OCI-LY7 (cell line): ENCODE measurements at regions of chr22 and their contacts with region 1.

Region 1: DNA sequence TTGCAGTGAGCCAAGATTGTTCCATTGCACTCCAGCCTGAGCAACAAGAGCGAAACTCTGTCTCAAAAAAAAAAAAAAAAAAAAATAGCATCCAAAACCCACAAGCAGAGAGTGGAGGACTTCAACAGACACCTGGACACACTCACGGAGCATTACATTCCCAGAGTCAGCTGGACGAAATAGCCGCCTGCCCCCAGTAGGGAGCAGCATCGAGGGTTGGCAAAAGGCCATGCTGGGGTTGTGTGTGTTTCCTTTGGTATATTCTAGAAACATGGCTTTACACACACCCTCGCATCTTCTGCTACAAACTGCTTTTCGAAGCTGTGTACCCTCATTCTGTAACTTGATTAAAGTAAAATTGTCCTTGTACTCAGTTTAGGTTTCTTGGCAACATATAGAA is 5.3 kb downstream of the ADA2 start:
- DNase-seq: peak; percentile 67
- H3K4me3 ChIP-seq: no peak overlapping the region
- H3K27ac ChIP-seq: peak overlapping the region; percentile 4
- H3K4me1 ChIP-seq: peaks cover 47% of the 10 kb centered on the region
- CTCF ChIP-seq: peak; percentile 72

Region 2: DNA sequence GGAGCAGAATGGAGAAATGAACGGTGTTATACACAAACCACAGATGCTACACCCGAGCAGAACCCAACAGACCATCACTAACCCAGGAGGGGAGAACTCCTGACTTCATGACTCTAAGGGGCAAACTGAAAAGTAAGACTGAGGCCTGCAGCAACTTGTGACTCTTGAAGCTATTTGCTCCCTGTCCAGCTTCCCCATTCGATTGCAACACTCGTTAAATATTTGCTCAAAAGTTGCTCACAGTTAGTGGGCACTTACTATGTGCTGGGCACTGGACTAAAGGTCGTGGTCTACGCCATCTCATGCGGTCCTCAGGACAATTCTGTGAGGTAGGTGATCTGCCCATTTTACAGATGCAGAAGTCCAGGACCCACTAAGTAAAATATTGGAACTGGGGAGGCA is 14.8 kb after region 1 on chr22:
- CTCF ChIA-PET with region 1: no interaction called
- POLR2A ChIA-PET with region 1: interaction called, 10 read pairs
- intact Hi-C with region 1: no loop called
- DNase-seq: no peak
- H3K4me3 ChIP-seq: no peak overlapping the region
- H3K27ac ChIP-seq: no peak overlapping the region
- H3K4me1 ChIP-seq: no peaks in the 10 kb centered on the region
- CTCF ChIP-seq: no peak

Region 3: GRCh38 chr22:17258015-17258787 is 44.2 kb after region 1 on chr22:
- CTCF ChIA-PET with region 1: interaction called, 4 read pairs
- POLR2A ChIA-PET with region 1: interaction called, 21 read pairs
- intact Hi-C with region 1: loop called (anchors 1 kb)
- DNase-seq: peak; percentile 93
- H3K4me3 ChIP-seq: peak overlapping the region; percentile 44
- H3K27ac ChIP-seq: peak overlapping the region; percentile 84
- H3K4me1 ChIP-seq: peaks cover 23% of the 10 kb centered on the region
- CTCF ChIP-seq: no peak

Region 4: GRCh38 chr22:17368554-17369438 is 154.8 kb after region 1 on chr22:
- CTCF ChIA-PET with region 1: no interaction called
- POLR2A ChIA-PET with region 1: no interaction called
- intact Hi-C with region 1: loop called (anchors 2 kb)
- DNase-seq: peak; percentile 71
- H3K4me3 ChIP-seq: peak overlapping the region; percentile 66
- H3K27ac ChIP-seq: no peak overlapping the region
- H3K4me1 ChIP-seq: peaks cover 14% of the 10 kb centered on the region
- CTCF ChIP-seq: no peak

Region 5: DNA sequence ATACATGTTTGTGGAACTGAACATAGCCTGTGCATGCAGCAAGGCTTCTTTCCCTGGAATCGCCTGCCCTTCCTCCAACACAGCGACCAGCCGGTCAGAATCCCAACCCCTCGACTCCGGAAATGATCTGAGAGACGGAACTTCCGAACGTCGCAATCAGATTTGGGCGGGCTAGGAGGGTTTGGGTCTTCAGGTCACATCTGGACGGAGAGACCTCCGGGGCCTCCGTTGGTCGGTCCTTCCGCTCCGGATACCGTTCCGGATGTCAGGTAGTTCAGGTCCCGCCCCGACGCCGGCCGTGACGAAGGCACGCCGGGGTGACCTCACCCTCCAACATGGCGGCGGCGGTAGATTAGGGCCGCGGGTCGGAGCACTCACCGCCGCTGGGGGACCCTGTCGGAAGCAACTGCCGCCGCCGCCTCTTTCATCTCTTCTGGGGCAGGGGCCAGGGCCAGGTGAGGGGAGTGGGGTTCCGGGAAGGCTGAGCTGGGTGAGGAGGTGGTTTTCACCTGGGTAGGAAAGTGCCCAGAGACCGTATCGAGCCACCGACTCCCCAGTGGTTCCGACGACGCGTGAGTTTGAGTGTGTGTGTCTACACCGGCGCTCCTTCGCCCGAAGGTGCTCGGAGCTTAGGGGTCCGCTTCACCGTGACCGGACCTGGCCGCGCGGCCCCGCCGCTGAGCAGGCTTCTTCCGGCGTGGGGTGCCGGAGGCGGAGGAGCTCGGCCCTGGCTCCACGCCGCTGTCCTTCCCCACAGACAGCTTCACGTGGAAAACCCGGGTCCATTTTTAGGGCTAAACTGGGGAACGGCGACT is 424.7 kb after region 1 on chr22 and contains the start of gene BCL2L13:
- CTCF ChIA-PET with region 1: no interaction called
- POLR2A ChIA-PET with region 1: no interaction called
- intact Hi-C with region 1: loop called (anchors 10 kb)
- DNase-seq: peak; percentile 95
- H3K4me3 ChIP-seq: peak within 1 kb of the TSS; percentile 81
- H3K27ac ChIP-seq: peak within 1 kb of the TSS; percentile 81
- H3K4me1 ChIP-seq: peaks cover 19% of the 10 kb centered on the region
- CTCF ChIP-seq: no peak
- total RNA-seq, gene BCL2L13: 21.7 and 25.2 TPM in 2 replicates